B cell (primary cell): ENCODE measurements at regions of chr6 and their contacts with region 1.

Region 1: GRCh38 chr6:99603421-99604165 is 3.0 kb upstream of the PRDM13 start:
- DNase-seq: peak; percentile 71
- ATAC-seq: peak; percentile 48
- H3K4me3 ChIP-seq: peak overlapping the region in 4 of 5 experiments; percentile 30 to 56 (median 48)
- H3K4me3 Mint-ChIP-seq: peak overlapping the region; percentile 70
- H3K27ac ChIP-seq: no peak overlapping the region
- H3K27ac Mint-ChIP-seq: no peak overlapping the region
- H3K4me1 ChIP-seq: peaks cover 32 to 61% of the 10 kb centered on the region in 2 donors
- H3K4me1 Mint-ChIP-seq: peaks cover 33% of the 10 kb centered on the region
- H3K27me3 ChIP-seq: peaks cover 0 to 86% (median 84%) of the 10 kb centered on the region in 4 experiments
- H3K27me3 Mint-ChIP-seq: peaks cover 78% of the 10 kb centered on the region
- CTCF ChIP-seq: no peak

Region 2: DNA sequence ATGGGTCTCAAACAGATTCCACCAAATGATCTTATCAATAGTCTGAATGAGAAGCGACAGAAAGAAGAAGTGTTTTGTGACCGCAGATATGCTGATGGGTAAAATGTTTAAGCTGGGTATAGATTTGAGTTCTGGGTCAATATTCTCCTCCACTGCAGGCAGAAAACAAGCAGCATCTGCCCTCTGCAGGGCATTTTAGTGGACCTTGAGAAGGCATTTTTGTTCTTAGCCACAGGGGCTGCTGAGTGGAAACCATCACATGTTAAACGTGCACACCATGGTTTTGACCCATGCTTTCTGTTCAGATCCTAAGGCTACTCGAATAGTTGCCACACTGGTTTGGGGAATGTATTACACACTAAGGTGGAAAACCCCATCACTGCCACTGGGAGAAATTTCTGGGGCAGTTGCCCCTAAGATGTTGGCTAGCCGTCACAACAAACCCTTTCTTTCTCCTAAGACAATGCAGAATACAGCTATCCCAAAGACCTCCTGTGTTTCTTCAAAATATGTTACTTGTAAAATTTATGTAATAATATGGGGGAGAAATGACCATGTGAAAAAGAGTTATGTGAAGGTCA is 763.7 kb before region 1 on chr6:
- CTCF ChIA-PET with region 1: no interaction called
- POLR2A ChIA-PET with region 1: no interaction called
- intact Hi-C with region 1: loop called (anchors 5 kb)
- DNase-seq: peak; percentile 12
- ATAC-seq: no peak
- H3K4me3 ChIP-seq: no peak overlapping the region
- H3K4me3 Mint-ChIP-seq: no peak overlapping the region
- H3K27ac ChIP-seq: no peak overlapping the region
- H3K27ac Mint-ChIP-seq: no peak overlapping the region
- H3K4me1 ChIP-seq: peaks cover 30 to 47% of the 10 kb centered on the region in 2 donors
- H3K4me1 Mint-ChIP-seq: peaks cover 27% of the 10 kb centered on the region
- H3K27me3 ChIP-seq: peaks cover 1 to 79% (median 74%) of the 10 kb centered on the region in 4 experiments
- H3K27me3 Mint-ChIP-seq: peaks cover 78% of the 10 kb centered on the region
- CTCF ChIP-seq: no peak

Region 3: GRCh38 chr6:99588618-99589289 is 14.8 kb before region 1 on chr6:
- CTCF ChIA-PET with region 1: interaction called, 8 read pairs
- POLR2A ChIA-PET with region 1: no interaction called
- intact Hi-C with region 1: loop called (anchors 2 kb)
- DNase-seq: peak; percentile 76
- ATAC-seq: peak; percentile 76
- H3K4me3 ChIP-seq: peak overlapping the region; percentile 39 to 76 (median 58)
- H3K4me3 Mint-ChIP-seq: peak overlapping the region; percentile 92
- H3K27ac ChIP-seq: no peak overlapping the region
- H3K27ac Mint-ChIP-seq: peak overlapping the region; percentile 70
- H3K4me1 ChIP-seq: peaks cover 29 to 33% of the 10 kb centered on the region in 2 donors
- H3K4me1 Mint-ChIP-seq: peaks cover 30% of the 10 kb centered on the region
- H3K27me3 ChIP-seq: peaks cover 5 to 55% (median 47%) of the 10 kb centered on the region in 4 experiments
- H3K27me3 Mint-ChIP-seq: peaks cover 57% of the 10 kb centered on the region
- CTCF ChIP-seq: peak; percentile 29

Region 4: GRCh38 chr6:100464903-100465700 is 861.5 kb after region 1 on chr6 and contains the start of gene SIM1:
- CTCF ChIA-PET with region 1: no interaction called
- POLR2A ChIA-PET with region 1: no interaction called
- intact Hi-C with region 1: loop called (anchors 5 kb)
- DNase-seq: peak; percentile 50
- ATAC-seq: peak; percentile 24
- H3K4me3 ChIP-seq: peak within 1 kb of the TSS in 2 of 5 experiments; percentile 3 to 9
- H3K4me3 Mint-ChIP-seq: peak within 1 kb of the TSS; percentile 61
- H3K27ac ChIP-seq: no peak within 1 kb of the TSS
- H3K27ac Mint-ChIP-seq: peak within 1 kb of the TSS; percentile 46
- H3K4me1 ChIP-seq: peaks cover 25 to 46% of the 10 kb centered on the region in 2 donors
- H3K4me1 Mint-ChIP-seq: peaks cover 20% of the 10 kb centered on the region
- H3K27me3 ChIP-seq: peaks cover 1 to 92% (median 86%) of the 10 kb centered on the region in 4 experiments
- H3K27me3 Mint-ChIP-seq: peaks cover 73% of the 10 kb centered on the region
- CTCF ChIP-seq: no peak
- total RNA-seq, gene SIM1: not detected in 2 replicates